OCI-LY7 (cell line): ENCODE measurements at regions of chr3 and their contacts with region 1.

Region 1: GRCh38 chr3:97910931-97911351 is 61.3 kb downstream of the RIOX2 start:
- DNase-seq: peak; percentile 23
- H3K4me3 ChIP-seq: no peak overlapping the region
- H3K27ac ChIP-seq: no peak overlapping the region
- H3K4me1 ChIP-seq: peaks cover 7% of the 10 kb centered on the region
- CTCF ChIP-seq: no peak

Region 2: DNA sequence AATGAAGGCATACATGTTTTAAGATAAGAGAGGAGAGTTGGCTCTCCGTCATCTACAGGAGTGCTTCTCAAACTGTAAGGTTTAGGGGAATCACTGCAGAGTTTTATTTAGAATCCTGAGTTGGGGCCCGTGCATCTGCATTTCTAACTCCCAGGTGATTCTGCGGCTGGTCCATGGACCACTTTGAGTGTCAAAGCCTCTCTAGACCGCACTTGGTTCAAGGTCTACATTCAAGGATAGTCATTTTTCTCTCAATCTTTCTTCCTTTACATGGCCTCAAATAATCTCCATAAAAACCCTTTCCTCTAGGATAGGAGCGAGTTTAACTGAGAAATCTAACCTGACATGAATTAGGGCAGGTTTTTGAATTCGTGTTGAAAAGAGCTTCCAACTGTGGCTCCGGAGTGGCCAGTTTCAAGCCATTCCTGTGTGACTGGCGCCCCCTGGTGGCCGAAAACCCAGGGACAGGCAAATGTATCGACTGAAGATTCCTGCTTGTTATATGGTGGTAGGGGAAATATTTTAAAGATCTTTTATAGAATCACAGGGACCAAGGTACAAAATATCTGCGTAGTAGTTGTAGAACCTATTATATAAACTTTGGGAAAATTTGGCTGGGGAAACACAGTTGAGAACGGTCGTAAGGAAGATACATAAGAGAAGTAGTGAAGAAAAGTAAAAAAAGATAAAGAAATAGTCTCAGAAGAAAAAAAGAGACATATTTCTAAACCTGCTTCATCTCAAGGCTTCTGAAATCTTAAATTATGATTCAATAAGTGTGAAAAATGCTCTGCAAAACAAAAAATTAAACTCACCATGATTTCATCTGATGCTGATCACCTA is 112.3 kb after region 1 on chr3:
- CTCF ChIA-PET with region 1: no interaction called
- POLR2A ChIA-PET with region 1: no interaction called
- intact Hi-C with region 1: loop called (anchors 10 kb)
- DNase-seq: peak; percentile 70
- H3K4me3 ChIP-seq: no peak overlapping the region
- H3K27ac ChIP-seq: no peak overlapping the region
- H3K4me1 ChIP-seq: no peaks in the 10 kb centered on the region
- CTCF ChIP-seq: peak; percentile 100